Adrenal gland (tissue), 19 donors: ENCODE measurements at regions of chr5 and their contacts with region 1.

Region 1: DNA sequence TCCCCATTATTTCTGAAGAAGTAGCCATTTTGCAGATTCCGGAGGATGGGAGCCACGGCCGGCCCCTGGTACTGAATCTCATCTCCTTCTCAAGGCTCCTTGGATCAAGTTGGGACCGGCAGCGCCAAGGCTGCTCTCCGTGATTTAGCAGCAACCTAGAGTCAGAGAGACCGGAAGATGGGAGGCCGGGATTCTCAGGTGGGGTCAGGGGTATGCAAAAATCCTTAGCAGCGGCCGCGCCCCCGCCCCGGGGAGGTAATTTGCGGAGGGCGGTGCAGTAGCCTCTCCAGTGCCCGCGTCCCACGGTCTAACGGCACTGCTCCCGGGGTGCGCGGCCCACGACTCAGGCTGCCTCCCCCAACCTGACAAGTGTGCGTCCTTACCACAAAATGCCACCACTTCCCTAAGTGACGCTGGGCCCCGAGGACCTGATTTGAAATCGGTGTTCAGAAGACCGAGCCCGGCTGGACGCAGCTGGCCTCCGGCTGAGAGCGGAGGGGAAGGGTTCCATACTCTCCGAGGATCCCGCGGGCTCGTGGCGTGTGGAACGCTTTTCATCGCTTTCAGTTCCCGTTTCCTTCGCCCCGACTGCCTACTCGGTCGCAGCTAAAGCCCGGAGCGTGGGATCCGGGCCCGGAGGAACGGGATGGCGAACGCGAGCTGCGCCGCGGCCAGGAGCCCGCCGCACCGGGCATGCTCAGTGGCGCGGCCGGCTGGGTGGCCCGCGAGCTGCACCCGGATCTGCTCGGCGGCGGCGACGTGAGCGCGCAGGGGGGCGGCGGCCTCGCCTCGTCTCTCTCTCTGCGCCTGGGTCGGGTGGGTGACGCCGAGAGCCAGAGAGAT is at the start of gene SCAMP1:
- DNase-seq: peak; percentile 89 to 96 (median 94)
- H3K4me3 ChIP-seq: peak within 1 kb of the TSS; percentile 48 to 100 (median 84)
- H3K27ac ChIP-seq: peak within 1 kb of the TSS; percentile 85 to 92 (median 89)
- H3K4me1 ChIP-seq: peaks cover 13 to 29% of the 10 kb centered on the region in 2 donors
- H3K27me3 ChIP-seq: no peaks in the 10 kb centered on the region
- CTCF ChIP-seq: peak in 3 of 6 experiments; percentile 49 to 84 (median 54)
- POLR2A ChIP-seq: peak; percentile 93 to 95
- total RNA-seq, gene SCAMP1: 19.1 to 40.2 (median 31.7) TPM

Region 2: DNA sequence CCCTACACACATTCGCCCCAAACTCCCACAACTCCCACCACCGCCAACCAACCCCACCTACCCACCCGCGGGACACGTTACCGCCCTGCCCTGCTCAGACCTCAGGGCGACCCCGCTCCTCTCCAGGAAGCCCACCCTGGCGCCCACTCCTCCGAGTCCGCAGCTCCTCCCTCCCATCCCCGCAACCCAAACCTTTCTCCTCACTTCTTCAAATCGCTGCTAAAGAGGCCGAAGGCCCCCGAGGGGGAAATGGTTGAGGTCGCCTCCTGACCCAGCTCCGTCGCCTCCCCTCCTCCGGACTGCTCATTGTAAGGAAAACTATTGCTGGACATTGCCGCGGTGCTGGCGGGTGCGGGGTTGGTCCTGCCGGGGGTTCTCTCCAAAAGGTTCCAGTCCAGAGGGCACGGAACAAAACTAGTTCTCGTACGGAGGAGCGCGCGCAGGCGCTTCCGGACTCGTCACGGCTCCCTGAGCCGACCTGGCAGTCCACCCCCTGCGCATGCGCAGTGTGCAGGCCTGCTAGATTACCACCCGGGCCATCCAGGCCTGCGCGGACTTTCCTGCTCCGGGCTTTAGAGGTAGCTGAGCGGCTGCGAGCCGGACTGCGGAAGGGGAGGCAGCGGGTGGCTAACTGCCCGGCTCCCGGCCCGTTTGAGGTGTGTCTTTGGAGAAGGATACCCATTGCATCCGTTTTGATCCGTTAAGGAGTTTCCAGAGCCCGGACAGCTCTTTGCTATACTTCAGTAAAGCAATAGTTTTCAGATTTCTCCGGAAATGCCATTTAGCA is 65.6 kb before region 1 on chr5 and contains the start of gene AP3B1:
- intact Hi-C with region 1: loop called (anchors 5 kb)
- DNase-seq: peak; percentile 99 to 100 (median 99)
- H3K4me3 ChIP-seq: peak within 1 kb of the TSS; percentile 76 to 100 (median 83)
- H3K27ac ChIP-seq: peak within 1 kb of the TSS; percentile 79 to 92 (median 85)
- H3K4me1 ChIP-seq: peaks cover 0 to 31% of the 10 kb centered on the region in 2 donors
- H3K27me3 ChIP-seq: no peaks in the 10 kb centered on the region
- CTCF ChIP-seq: peak in 1 of 6 experiments; percentile 37
- POLR2A ChIP-seq: peak; percentile 96
- total RNA-seq, gene AP3B1: 25.7 to 59.1 (median 36.0) TPM

Region 3: GRCh38 chr5:78533356-78533755 is 173.3 kb after region 1 on chr5:
- intact Hi-C with region 1: no loop called
- DNase-seq: no peak
- H3K4me3 ChIP-seq: no peak overlapping the region
- H3K27ac ChIP-seq: peak overlapping the region in 2 of 5 donors; percentile 61 to 88
- H3K4me1 ChIP-seq: peaks cover 22 to 41% of the 10 kb centered on the region in 2 donors
- H3K27me3 ChIP-seq: no peaks in the 10 kb centered on the region
- CTCF ChIP-seq: peak in 3 of 6 experiments; percentile 21 to 28 (median 28)
- POLR2A ChIP-seq: no peak